HCT116 (cell line): ENCODE measurements at regions of chr17 and their contacts with region 1.

Region 1: DNA sequence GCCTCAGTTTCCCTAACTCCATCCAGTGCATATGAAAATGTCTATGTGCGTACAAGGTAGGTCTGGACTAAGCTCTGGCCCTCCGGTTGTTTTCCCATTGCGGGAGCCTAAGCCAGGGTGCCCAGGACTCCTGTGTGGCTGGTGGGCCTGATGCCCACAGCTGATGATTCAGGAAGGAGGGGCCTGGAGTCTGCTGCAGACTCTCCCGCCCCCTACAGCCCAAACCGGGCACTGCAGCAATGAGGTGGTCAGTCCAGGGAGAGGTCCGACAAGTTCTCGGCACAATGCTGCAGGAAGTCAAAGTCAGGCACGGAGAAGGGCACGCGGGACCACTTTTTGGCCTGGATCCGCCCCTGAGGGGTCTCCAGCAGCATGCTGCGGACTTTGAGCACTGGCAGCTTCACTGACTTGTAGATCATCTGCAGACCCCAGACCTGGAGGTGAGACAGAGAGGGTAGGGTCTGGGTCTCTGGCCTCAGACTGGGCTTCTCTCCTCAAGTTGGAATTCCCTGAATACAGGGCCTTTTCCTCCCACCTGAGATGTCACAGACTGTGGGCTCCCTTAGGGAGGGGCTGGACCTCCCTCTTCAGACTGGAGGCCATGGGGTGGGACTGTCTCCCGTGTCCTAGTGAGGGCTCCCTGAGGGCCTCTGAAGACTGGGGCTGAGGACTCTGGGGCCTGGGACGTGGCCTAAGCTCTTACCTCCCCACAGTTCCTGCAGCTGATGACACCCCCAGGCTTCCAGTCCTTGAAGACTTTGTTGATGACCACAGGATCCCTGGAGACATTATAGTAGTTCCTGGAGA is 3.4 kb upstream of the ZNF385C start:
- DNase-seq: peak; percentile 61
- ATAC-seq: peak; percentile 94
- H3K4me3 ChIP-seq: 0 out of 4 replicates have a peak overlapping the region, but pooled peaks of 1 of the 2 experiments have one; percentile 19
- H3K27ac ChIP-seq: no peak overlapping the region
- H3K4me1 ChIP-seq: peaks cover 0 to 8% of the 10 kb centered on the region in 2 experiments; a peak in 3 of 4 replicates
- H3K27me3 ChIP-seq: no peaks in the 10 kb centered on the region
- CTCF ChIP-seq: peak; percentile 92 to 99 (median 99)
- POLR2A ChIP-seq: no peak
- RAD21 ChIP-seq: peak; percentile 94

Region 2: DNA sequence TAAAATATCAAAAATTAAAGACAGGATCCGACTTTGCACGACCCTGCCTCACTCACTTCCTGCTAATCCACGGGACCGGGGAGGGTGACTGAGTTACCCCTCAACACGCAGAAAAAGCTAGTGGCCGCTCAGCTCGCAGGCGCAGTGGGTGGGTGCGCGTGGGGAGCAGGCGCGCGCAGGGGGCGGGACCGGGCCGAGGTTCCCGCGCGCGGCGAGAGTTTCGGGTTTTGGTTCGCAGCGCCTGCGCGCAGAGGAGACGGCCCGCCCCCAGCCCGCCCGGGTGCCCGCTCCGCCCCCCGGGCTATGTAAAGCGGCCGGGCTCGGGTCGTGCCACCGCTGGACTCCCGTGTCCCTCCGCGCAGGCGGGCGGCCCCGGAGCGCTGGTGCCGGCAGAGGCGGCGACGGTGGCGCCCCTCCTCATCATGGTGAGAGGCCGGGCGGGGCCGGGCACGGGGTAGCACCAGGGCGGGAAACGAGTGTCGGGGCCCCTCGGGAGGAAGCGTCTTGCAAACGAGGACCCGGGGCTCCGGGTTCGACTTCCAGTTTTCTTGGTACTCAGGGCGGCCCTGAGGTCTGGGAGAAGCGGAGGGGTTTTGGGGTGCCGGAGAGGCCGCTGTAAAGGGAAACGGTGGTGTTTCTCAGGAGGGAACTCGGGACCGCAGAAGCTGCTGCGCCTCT is 135.1 kb before region 1 on chr17 and contains the start of gene CNP:
- CTCF ChIA-PET with region 1: interaction called, 4 read pairs
- POLR2A ChIA-PET with region 1: no interaction called
- RAD21 ChIA-PET with region 1: no interaction called
- intact Hi-C with region 1: loop called (anchors 5 kb)
- DNase-seq: peak; percentile 73
- ATAC-seq: peak; percentile 76
- H3K4me3 ChIP-seq: peak within 1 kb of the TSS; percentile 54 to 77
- H3K27ac ChIP-seq: peak within 1 kb of the TSS; percentile 73
- H3K4me1 ChIP-seq: peaks cover 7 to 22% of the 10 kb centered on the region in 2 experiments
- H3K27me3 ChIP-seq: no peaks in the 10 kb centered on the region
- CTCF ChIP-seq: no peak
- POLR2A ChIP-seq: peak; percentile 79
- RAD21 ChIP-seq: no peak
- total RNA-seq, gene CNP: 51.2 TPM

Region 3: GRCh38 chr17:42019509-42020404 is 82.0 kb before region 1 on chr17 and contains the start of gene NKIRAS2:
- CTCF ChIA-PET with region 1: interaction called, 15 read pairs
- POLR2A ChIA-PET with region 1: no interaction called
- RAD21 ChIA-PET with region 1: interaction called, 7 read pairs
- intact Hi-C with region 1: no loop called
- DNase-seq: peak; percentile 76
- ATAC-seq: peak; percentile 77
- H3K4me3 ChIP-seq: peak within 1 kb of the TSS; percentile 96
- H3K27ac ChIP-seq: peak within 1 kb of the TSS; percentile 73
- H3K4me1 ChIP-seq: peaks cover 24 to 44% of the 10 kb centered on the region in 2 experiments
- H3K27me3 ChIP-seq: no peaks in the 10 kb centered on the region
- CTCF ChIP-seq: peak; percentile 57 to 91 (median 84); a peak in 5 of 6 replicates
- POLR2A ChIP-seq: peak; percentile 69
- RAD21 ChIP-seq: no peak
- total RNA-seq, gene NKIRAS2: 26.4 TPM

Region 4: DNA sequence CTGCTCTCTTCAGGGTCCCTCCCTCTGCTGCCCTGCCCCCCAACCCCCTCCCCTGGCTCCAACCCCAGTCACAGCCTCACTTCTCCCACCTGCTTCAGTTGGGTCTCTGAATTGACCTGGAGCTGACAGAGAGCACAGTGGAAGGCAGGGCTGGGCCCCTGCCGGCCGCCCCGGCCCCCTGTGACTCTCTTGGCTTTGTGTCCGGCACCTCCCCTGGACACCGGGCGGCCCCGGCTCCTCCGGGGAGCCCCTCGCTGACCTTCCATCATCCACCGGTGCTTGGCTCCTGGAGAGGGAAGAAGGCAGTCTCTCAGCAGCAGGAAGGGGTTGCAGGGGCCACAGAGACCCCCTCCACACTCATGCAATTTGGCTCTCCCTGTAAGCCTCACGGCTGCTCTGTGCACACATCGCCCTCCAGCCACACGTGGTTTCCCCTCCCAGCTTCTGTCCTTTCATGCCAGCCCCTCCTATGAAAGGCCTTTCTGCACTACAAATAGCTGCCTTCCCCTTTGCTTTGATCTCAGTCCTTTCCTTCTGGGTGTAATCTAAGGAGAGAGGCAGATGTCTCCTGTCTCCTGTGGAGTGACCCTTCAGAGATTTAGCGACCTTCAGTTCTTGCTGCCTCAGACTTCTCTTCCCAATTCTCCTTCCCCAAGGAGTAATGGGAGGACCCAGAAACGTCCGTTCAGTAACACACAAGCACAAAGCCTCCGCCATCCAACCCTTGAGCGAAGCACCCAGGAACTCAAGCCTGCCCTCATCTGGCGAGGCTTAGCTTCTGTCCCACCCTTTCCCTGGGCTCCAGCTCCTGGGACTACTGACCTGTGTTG is 73.5 kb before region 1 on chr17:
- CTCF ChIA-PET with region 1: interaction called, 15 read pairs
- POLR2A ChIA-PET with region 1: no interaction called
- RAD21 ChIA-PET with region 1: interaction called, 7 read pairs
- intact Hi-C with region 1: loop called (anchors 1 kb)
- DNase-seq: peak; percentile 39
- ATAC-seq: peak; percentile 77
- H3K4me3 ChIP-seq: no peak overlapping the region
- H3K27ac ChIP-seq: no peak overlapping the region
- H3K4me1 ChIP-seq: peaks cover 15 to 32% of the 10 kb centered on the region in 2 experiments
- H3K27me3 ChIP-seq: no peaks in the 10 kb centered on the region
- CTCF ChIP-seq: peak; percentile 47 to 68 (median 56); a peak in 5 of 6 replicates
- POLR2A ChIP-seq: no peak
- RAD21 ChIP-seq: peak; percentile 36

Region 5: GRCh38 chr17:42067351-42068091 is 34.2 kb before region 1 on chr17:
- CTCF ChIA-PET with region 1: interaction called, 11 read pairs
- POLR2A ChIA-PET with region 1: no interaction called
- RAD21 ChIA-PET with region 1: no interaction called
- intact Hi-C with region 1: loop called (anchors 1 kb)
- DNase-seq: no peak
- ATAC-seq: peak; percentile 90
- H3K4me3 ChIP-seq: no peak overlapping the region
- H3K27ac ChIP-seq: no peak overlapping the region
- H3K4me1 ChIP-seq: peaks cover 0 to 9% of the 10 kb centered on the region in 2 experiments; a peak in 1 of 4 replicates
- H3K27me3 ChIP-seq: no peaks in the 10 kb centered on the region
- CTCF ChIP-seq: peak; percentile 95 to 96 (median 95)
- POLR2A ChIP-seq: no peak
- RAD21 ChIP-seq: peak; percentile 75

Region 6: DNA sequence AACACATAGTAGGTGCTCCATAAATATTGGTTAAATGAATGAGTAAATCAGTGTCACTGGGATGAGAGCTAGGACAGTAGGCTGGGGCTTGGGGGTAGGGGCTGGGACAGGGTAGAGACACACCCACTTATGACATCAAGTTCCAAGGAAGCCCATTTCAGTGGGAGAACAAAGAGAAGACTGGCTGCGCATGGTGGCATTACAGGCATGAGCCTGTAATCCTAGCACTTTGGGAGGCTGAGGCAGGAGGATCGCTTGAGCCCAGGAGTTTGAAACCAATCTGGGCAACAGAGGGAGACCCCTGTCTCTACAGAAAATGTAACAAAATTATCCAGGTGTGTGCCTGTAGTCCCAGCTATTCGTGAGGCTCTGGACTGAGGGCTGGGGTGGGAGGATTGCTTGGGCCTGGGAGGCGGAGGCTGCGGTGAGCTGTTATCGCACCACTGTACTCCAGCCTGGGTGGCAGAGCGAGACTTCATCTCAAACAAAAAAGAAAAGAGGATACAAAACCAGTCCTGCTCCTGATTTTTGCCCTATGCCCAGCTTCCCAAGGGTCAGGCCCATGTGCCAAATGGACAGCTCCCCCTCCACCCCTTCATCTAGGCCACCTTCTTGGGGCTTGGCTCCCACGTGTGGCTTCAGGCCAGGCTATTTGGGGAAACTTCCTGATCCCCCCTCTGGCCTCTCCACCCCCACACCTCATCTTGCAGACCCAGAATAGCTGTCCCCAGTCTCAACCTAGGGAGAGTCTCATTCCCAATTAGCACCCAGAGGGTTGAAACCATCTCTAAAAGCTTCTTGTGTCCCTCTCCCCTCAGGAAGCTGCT is 10.5 kb before region 1 on chr17:
- CTCF ChIA-PET with region 1: interaction called, 15 read pairs
- POLR2A ChIA-PET with region 1: no interaction called
- RAD21 ChIA-PET with region 1: no interaction called
- intact Hi-C with region 1: no loop called
- DNase-seq: no peak
- ATAC-seq: no peak
- H3K4me3 ChIP-seq: no peak overlapping the region
- H3K27ac ChIP-seq: no peak overlapping the region
- H3K4me1 ChIP-seq: peaks cover 9 to 20% of the 10 kb centered on the region in 2 experiments; a peak in 3 of 4 replicates
- H3K27me3 ChIP-seq: no peaks in the 10 kb centered on the region
- CTCF ChIP-seq: no peak
- POLR2A ChIP-seq: no peak
- RAD21 ChIP-seq: no peak